WTC11 (cell line): ENCODE measurements at regions of chr6 and their contacts with region 1.

Region 1: GRCh38 chr6:68967549-68968300 is 332.6 kb downstream of the ADGRB3 start:
- DNase-seq: peak; percentile 62
- ATAC-seq: peak; percentile 83
- H3K4me3 Mint-ChIP-seq: no peak overlapping the region; the same call in 1 of the 2 replicates
- H3K27ac Mint-ChIP-seq: no peak overlapping the region
- H3K4me1 Mint-ChIP-seq: peaks cover 10% of the 10 kb centered on the region
- H3K27me3 Mint-ChIP-seq: no peaks in the 10 kb centered on the region
- CTCF ChIP-seq: peak; percentile 82

Region 2: GRCh38 chr6:68947721-68948120 is 20.0 kb before region 1 on chr6:
- CTCF ChIA-PET with region 1: interaction called, 12 read pairs
- POLR2A ChIA-PET with region 1: no interaction called
- DNase-seq: no peak
- ATAC-seq: no peak
- H3K4me3 Mint-ChIP-seq: no peak overlapping the region
- H3K27ac Mint-ChIP-seq: peak overlapping the region; percentile 37; the same call in 1 of the 2 replicates
- H3K4me1 Mint-ChIP-seq: no peaks in the 10 kb centered on the region
- H3K27me3 Mint-ChIP-seq: no peaks in the 10 kb centered on the region
- CTCF ChIP-seq: no peak

Region 3: DNA sequence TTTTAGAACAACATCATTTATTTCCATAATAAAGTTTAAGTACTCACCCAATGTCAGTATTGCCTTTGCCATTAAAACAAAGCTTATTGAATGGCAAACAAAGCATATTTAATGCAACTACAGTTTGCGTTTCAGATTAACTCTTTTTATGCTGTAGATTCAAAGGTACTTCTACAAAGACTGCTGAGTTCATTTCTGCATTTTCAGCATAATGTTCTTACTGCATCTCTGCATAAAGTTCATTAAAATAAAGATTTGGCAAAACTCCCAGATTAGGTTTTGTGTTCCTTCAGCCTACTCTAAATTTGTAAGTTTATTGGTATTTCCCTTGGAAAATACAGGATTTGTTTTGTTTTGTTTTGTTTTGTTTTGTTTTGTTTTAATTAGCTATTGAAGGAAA is 26.8 kb after region 1 on chr6:
- CTCF ChIA-PET with region 1: no interaction called
- POLR2A ChIA-PET with region 1: no interaction called
- DNase-seq: no peak
- ATAC-seq: no peak
- H3K4me3 Mint-ChIP-seq: no peak overlapping the region
- H3K27ac Mint-ChIP-seq: no peak overlapping the region
- H3K4me1 Mint-ChIP-seq: peaks cover 19% of the 10 kb centered on the region
- H3K27me3 Mint-ChIP-seq: no peaks in the 10 kb centered on the region
- CTCF ChIP-seq: no peak